K562 (cell line): ENCODE measurements at regions of chr10 and their contacts with region 1.

Region 1: GRCh38 chr10:6401562-6402348 is 178.3 kb downstream of the PRKCQ start:
- DNase-seq: peak; percentile 72 to 86 (median 78)
- ATAC-seq: peak; percentile 98
- H3K4me3 ChIP-seq: peak overlapping the region; percentile 27; the same call in 1 of the 2 replicates
- H3K27ac ChIP-seq: no peak overlapping the region
- H3K4me1 ChIP-seq: peaks cover 0 to 3% of the 10 kb centered on the region in 2 experiments; a peak in 3 of 5 replicates
- H3K27me3 ChIP-seq: peaks cover 5 to 33% of the 10 kb centered on the region in 2 experiments
- CTCF ChIP-seq: peak; percentile 79 to 90 (median 85)
- EP300 ChIP-seq: peak; percentile 22; the same call in 1 of the 2 replicates
- POLR2A ChIP-seq: no peak
- RAD21 ChIP-seq: peak; percentile 95 to 96

Region 2: DNA sequence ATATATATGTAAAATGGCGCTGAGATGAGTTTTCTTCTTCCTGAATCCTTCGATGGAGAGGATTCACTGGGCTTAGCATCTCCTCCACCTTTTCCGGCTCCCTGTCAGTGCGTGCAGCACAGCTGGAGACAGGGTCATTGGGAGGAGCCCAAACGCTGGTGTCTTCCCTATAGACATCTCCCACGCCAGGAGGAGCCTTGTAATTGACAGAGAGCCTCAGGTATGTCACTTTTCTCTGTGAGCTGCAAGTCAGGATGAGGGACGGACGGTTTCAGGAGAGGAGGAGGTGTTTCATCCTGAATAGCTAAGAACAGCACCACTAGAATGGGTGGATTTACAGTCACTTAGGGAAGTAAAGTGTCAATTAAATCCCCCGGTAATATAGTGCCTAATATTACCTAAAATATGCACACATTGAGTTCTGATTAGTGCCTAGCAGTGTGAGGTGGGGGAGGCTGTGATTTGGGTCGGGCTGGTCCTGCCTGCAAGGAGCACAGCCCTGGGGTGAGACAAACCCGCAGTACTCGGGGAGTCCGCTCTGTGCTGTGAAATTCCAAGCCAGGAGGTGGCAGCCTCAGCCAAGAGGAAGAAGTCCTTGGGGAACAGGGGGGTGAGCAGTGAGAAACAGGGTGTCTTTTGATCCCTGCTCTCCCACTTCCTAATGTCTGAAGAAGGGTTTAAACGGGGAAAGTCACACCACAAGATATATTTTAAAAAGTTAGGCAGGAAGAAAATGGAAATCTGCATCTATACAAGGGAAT is 452.6 kb before region 1 on chr10:
- CTCF ChIA-PET with region 1: interaction called, 5 read pairs
- POLR2A ChIA-PET with region 1: interaction called, 4 read pairs
- in situ Hi-C with region 1: loop called (anchors 25 kb)
- intact Hi-C with region 1: loop called (anchors 2 kb)
- DNase-seq: peak; percentile 60 to 83 (median 72)
- ATAC-seq: peak; percentile 95
- H3K4me3 ChIP-seq: no peak overlapping the region
- H3K27ac ChIP-seq: no peak overlapping the region
- H3K4me1 ChIP-seq: peaks cover 9 to 20% of the 10 kb centered on the region in 2 experiments; a peak in 4 of 5 replicates
- H3K27me3 ChIP-seq: no peaks in the 10 kb centered on the region
- CTCF ChIP-seq: peak; percentile 85 to 92 (median 90)
- EP300 ChIP-seq: no peak
- POLR2A ChIP-seq: no peak
- RAD21 ChIP-seq: peak; percentile 82 to 93

Region 3: DNA sequence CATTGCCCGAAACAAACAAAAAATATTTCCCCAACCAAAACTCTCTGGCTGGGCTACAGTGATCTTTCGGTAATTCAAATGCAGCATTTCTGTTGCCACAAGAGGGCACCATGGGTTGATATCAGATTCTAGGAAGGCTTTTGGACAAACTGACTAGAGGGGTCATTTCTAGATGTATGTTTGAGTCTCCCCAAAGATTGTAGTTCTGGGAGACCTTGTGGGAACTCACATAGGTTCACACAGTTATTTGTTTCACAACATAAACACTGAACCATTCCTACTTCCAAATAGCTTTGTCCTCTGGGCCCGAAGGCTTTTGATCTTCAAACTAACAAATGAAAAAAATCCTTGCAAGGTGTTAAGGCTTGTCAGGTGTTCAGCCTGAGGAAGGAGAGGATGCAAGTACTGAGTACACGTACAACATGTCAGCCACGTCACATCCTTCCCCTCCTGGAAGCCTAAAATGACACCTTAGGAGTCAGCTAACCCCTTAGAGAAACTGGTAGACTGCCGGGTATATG is 387.5 kb before region 1 on chr10:
- CTCF ChIA-PET with region 1: no interaction called
- POLR2A ChIA-PET with region 1: no interaction called
- in situ Hi-C with region 1: no loop called
- intact Hi-C with region 1: loop called (anchors 1 kb)
- DNase-seq: peak; percentile 25 to 68 (median 43)
- ATAC-seq: peak; percentile 91
- H3K4me3 ChIP-seq: no peak overlapping the region
- H3K27ac ChIP-seq: no peak overlapping the region
- H3K4me1 ChIP-seq: peaks cover 0 to 5% of the 10 kb centered on the region in 2 experiments; a peak in 3 of 5 replicates
- H3K27me3 ChIP-seq: peaks cover 4 to 10% of the 10 kb centered on the region in 2 experiments; a peak in 2 of 5 replicates
- CTCF ChIP-seq: peak; percentile 74 to 79 (median 78)
- EP300 ChIP-seq: no peak
- POLR2A ChIP-seq: no peak
- RAD21 ChIP-seq: peak; percentile 63 to 80

Region 4: GRCh38 chr10:6088721-6089390 is 312.9 kb before region 1 on chr10 and contains the start of gene RBM17:
- CTCF ChIA-PET with region 1: no interaction called
- POLR2A ChIA-PET with region 1: no interaction called
- in situ Hi-C with region 1: no loop called
- intact Hi-C with region 1: loop called (anchors 5 kb)
- DNase-seq: peak; percentile 93 to 97 (median 95)
- ATAC-seq: peak; percentile 93
- H3K4me3 ChIP-seq: peak within 1 kb of the TSS; percentile 98
- H3K27ac ChIP-seq: peak within 1 kb of the TSS; percentile 89
- H3K4me1 ChIP-seq: peaks cover 14 to 17% of the 10 kb centered on the region in 2 experiments; a peak in 4 of 5 replicates
- H3K27me3 ChIP-seq: peaks cover 4% of the 10 kb centered on the region in 2 experiments; a peak in 4 of 5 replicates
- CTCF ChIP-seq: peak; percentile 100
- EP300 ChIP-seq: no peak; the same call in 1 of the 2 replicates
- POLR2A ChIP-seq: no peak
- RAD21 ChIP-seq: peak; percentile 92 to 93
- polyA plus RNA-seq, gene RBM17: 23.6 to 25.8 TPM

Region 5: DNA sequence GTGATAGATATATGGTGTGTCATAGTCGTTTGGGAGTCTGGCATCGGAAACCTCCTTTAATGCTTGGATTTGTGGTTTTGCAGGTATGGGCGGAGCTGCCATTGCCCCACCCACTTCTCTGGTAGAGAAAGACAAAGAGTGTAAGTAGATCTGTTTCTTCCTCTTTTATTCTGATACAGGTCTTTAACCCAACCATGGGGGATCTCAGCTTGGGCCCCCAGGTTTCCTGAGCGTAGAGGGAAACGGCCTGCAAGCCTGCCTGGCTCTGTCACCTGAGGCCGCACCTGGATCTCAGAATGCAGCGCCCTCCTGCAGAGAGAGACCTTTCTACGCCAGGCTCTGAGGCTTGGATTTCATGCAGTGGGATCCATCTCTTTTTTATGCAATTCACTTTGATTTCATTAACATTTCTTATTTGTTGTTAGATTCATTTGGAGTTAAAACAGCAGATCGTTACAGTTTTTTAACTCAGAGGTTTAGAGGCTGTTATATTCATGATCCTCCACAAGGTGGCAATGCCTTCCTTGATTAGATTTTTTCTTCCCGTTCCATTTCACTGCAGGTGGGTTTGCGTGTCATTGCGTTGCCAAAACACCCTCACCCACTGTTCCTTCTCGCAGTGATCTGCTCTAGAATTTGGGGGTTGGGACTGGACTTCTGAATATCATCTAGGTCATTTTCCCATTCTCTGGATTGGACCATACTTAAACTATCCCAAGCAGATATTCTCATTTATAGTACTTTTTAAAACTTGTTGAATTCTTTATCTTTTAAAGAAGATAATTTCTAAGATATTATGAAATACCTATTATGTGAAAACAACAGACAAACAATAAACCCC is 292.9 kb before region 1 on chr10:
- CTCF ChIA-PET with region 1: interaction called, 37 read pairs
- POLR2A ChIA-PET with region 1: interaction called, 3 read pairs
- in situ Hi-C with region 1: no loop called
- intact Hi-C with region 1: loop called (anchors 1 kb)
- DNase-seq: peak; percentile 50 to 61 (median 53)
- ATAC-seq: peak; percentile 64
- H3K4me3 ChIP-seq: no peak overlapping the region
- H3K27ac ChIP-seq: no peak overlapping the region
- H3K4me1 ChIP-seq: no peaks in the 10 kb centered on the region; a peak in 1 of 5 replicates
- H3K27me3 ChIP-seq: no peaks in the 10 kb centered on the region
- CTCF ChIP-seq: peak; percentile 48 to 74 (median 59); a peak in 5 of 6 replicates
- EP300 ChIP-seq: no peak
- POLR2A ChIP-seq: no peak
- RAD21 ChIP-seq: peak; percentile 77

Region 6: GRCh38 chr10:6202684-6203330 is 198.9 kb before region 1 on chr10 and contains the start of gene PFKFB3:
- CTCF ChIA-PET with region 1: interaction called, 33 read pairs
- POLR2A ChIA-PET with region 1: interaction called, 5 read pairs
- in situ Hi-C with region 1: no loop called
- intact Hi-C with region 1: loop called (anchors 1 kb)
- DNase-seq: peak; percentile 91 to 96 (median 95)
- ATAC-seq: peak; percentile 94
- H3K4me3 ChIP-seq: peak within 1 kb of the TSS; percentile 62
- H3K27ac ChIP-seq: peak within 1 kb of the TSS; percentile 50; the same call in 2 of the 3 replicates
- H3K4me1 ChIP-seq: peaks cover 8 to 40% of the 10 kb centered on the region in 2 experiments
- H3K27me3 ChIP-seq: no peaks in the 10 kb centered on the region
- CTCF ChIP-seq: peak; percentile 87 to 89 (median 87)
- EP300 ChIP-seq: no peak
- POLR2A ChIP-seq: peak; percentile 45; the same call in 1 of the 2 replicates
- RAD21 ChIP-seq: peak; percentile 76 to 85
- polyA plus RNA-seq, gene PFKFB3: 0.46 to 0.73 TPM

Region 7: GRCh38 chr10:6337382-6337781 is 64.4 kb before region 1 on chr10:
- CTCF ChIA-PET with region 1: no interaction called
- POLR2A ChIA-PET with region 1: no interaction called
- in situ Hi-C with region 1: no loop called
- intact Hi-C with region 1: loop called (anchors 2 kb)
- DNase-seq: peak in 1 of 4 experiments; percentile 2
- ATAC-seq: no peak
- H3K4me3 ChIP-seq: no peak overlapping the region
- H3K27ac ChIP-seq: no peak overlapping the region
- H3K4me1 ChIP-seq: no peaks in the 10 kb centered on the region
- H3K27me3 ChIP-seq: peaks cover 5 to 33% of the 10 kb centered on the region in 2 experiments; a peak in 4 of 5 replicates
- CTCF ChIP-seq: no peak
- EP300 ChIP-seq: no peak
- POLR2A ChIP-seq: no peak
- RAD21 ChIP-seq: no peak

Region 8: DNA sequence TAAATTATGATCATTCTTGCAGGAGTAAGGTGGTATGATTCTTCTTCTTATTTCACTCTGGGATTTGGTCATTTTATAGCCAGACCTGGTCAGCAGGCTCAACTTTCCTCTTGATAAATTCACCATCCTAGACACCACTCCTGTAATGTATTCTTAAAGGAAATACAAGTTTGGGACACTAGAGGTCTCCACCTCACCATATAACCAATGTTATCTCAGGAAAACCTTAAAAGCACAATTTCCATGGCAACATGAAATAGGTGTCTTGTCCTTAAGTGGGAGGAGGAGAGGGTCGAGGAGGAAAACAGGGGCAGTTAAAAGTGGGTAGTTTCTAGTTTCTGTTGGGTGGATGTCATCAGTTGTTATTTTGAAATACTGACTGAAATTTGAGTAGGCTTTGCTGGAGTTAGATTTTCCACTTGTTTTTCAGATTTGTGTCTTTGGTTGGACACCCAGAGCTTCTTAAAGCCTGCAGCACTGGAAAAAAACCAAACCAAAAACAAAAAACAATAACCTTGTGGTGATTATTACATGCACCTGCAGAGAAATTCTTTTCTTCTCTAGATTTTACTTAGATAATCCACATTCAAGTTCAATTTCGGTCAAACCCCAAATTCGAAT is 15.2 kb after region 1 on chr10:
- CTCF ChIA-PET with region 1: no interaction called
- POLR2A ChIA-PET with region 1: no interaction called
- in situ Hi-C with region 1: no loop called
- intact Hi-C with region 1: no loop called
- DNase-seq: peak; percentile 44 to 69 (median 52)
- ATAC-seq: peak; percentile 88
- H3K4me3 ChIP-seq: no peak overlapping the region
- H3K27ac ChIP-seq: no peak overlapping the region
- H3K4me1 ChIP-seq: no peaks in the 10 kb centered on the region
- H3K27me3 ChIP-seq: peaks cover 2 to 13% of the 10 kb centered on the region in 2 experiments; a peak in 1 of 5 replicates
- CTCF ChIP-seq: peak; percentile 54 to 91 (median 67); a peak in 5 of 6 replicates
- EP300 ChIP-seq: no peak
- POLR2A ChIP-seq: no peak
- RAD21 ChIP-seq: peak; percentile 94 to 98

Region 9: DNA sequence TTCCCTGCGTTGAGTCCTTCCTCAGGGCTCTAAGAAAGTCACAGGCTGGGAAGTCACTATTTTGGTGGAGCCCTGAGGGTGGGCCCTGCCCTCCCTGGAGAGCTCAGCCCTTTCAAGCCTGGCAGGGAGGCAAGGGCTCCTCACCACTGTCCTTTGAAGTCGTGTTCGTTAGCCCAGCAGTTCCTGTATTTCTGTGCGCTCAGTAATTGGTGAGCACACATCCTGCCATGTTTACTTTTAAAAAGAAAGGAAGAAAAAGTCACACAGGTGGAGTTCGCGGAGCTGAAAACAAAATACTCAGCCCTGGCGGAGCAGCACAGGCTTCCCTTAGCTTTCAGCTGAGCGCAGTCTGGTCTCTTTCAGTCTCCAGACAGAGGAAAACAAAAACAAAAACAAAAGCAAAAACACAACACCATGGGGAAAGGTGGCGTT is 141.3 kb after region 1 on chr10:
- CTCF ChIA-PET with region 1: no interaction called
- POLR2A ChIA-PET with region 1: no interaction called
- in situ Hi-C with region 1: no loop called
- intact Hi-C with region 1: no loop called
- DNase-seq: no peak
- ATAC-seq: no peak
- H3K4me3 ChIP-seq: no peak overlapping the region
- H3K27ac ChIP-seq: no peak overlapping the region
- H3K4me1 ChIP-seq: peaks cover 4 to 15% of the 10 kb centered on the region in 2 experiments; a peak in 2 of 5 replicates
- H3K27me3 ChIP-seq: no peaks in the 10 kb centered on the region
- CTCF ChIP-seq: no peak
- EP300 ChIP-seq: no peak
- POLR2A ChIP-seq: no peak
- RAD21 ChIP-seq: no peak

Region 10: DNA sequence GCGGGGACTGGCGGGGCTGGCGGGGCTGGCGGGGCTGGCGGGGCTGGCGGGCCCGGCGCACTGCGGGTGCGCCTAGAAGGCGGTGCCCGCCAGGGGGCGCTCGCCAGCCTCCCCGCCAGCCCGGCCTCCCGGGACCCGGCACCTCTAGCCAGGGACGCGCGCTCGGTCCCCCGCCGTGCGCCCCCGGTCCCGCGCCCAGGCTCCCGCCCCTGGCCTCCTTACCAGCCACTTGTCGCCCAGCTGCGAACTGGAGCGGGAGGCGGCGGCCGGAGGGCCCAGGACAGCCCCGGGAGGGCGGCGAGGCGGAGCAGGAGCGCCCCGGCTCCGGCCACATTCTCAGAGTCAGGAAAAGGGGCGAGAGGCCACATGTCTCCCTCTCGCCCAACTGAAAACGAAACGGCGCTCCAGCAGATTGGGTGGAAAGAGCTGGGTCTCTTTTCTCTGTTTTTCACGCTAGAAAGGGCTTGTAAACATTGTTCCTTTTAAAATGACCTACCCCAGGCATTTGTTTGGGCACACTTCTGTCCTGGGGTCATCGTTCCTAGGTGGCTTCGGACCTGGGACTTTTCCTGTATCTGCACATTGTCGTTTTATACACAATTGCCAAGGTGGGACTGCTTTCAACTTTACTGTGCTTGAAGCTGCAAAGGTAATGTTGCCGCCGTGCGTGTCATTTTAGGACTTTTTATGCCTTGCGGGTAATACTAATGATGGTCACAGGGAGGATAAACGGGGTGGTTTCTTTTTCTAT is 178.7 kb after region 1 on chr10:
- CTCF ChIA-PET with region 1: no interaction called
- POLR2A ChIA-PET with region 1: no interaction called
- in situ Hi-C with region 1: no loop called
- intact Hi-C with region 1: no loop called
- DNase-seq: peak; percentile 84 to 92 (median 90)
- ATAC-seq: peak; percentile 86
- H3K4me3 ChIP-seq: peak overlapping the region; percentile 84
- H3K27ac ChIP-seq: peak overlapping the region; percentile 86
- H3K4me1 ChIP-seq: peaks cover 18 to 26% of the 10 kb centered on the region in 2 experiments
- H3K27me3 ChIP-seq: no peaks in the 10 kb centered on the region
- CTCF ChIP-seq: peak in 2 of 3 experiments; percentile 57 to 74; a peak in 4 of 6 replicates
- EP300 ChIP-seq: no peak
- POLR2A ChIP-seq: peak; percentile 90
- RAD21 ChIP-seq: peak; percentile 29 to 43